IMR-90 (cell line): ENCODE measurements at regions of chr22 and their contacts with region 1.

Region 1: DNA sequence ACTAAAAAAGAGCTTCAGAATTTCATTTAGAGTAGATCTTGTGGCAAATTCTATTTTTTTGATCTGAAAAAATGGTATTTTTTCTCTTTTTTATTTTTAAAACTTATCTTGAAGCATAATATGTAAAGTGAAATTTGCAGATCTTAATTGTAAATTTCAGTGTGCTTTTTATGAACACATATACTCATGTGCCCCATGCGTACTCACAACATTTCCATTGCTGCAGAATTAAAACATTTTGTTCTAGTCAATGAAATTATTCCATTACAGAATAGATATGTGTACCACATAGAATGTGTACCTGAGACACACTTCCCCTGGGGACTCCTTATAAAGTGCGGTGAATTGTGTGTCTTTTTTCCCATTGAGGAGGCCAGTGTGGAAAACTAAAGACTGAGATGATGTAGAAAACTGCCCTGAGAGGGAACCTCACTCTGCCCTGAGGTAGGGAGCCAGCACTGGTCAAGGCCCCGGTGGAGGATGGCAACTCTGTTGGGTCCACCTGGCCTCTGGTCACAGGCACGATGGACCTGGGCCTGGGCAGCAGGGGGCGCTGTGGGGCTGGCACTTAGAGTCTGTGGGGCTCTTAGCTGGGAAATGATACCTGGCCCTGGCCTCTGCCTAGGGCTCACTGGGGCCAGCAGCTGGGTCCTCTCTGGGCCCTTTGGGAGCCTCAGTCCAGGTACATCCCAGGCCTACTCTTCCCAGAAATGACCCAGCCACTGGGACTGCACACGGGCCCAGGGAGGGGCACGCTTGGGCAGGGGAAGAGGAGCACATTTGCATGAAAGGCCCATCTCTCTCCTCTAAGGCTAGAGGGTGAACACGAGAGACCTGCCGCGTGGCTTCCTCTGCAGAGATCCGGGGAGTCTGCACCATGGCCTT is 77.9 kb upstream of the TOP3B start:
- DNase-seq: peak; percentile 24
- ATAC-seq: peak; percentile 92
- H3K4me3 ChIP-seq: no peak overlapping the region
- H3K27ac ChIP-seq: no peak overlapping the region
- H3K4me1 ChIP-seq: no peaks in the 10 kb centered on the region; the same call in 1 of the 2 replicates
- H3K27me3 ChIP-seq: peaks cover 33% of the 10 kb centered on the region
- CTCF ChIP-seq: peak; percentile 78
- POLR2A ChIP-seq: no peak
- RAD21 ChIP-seq: peak; percentile 65

Region 2: DNA sequence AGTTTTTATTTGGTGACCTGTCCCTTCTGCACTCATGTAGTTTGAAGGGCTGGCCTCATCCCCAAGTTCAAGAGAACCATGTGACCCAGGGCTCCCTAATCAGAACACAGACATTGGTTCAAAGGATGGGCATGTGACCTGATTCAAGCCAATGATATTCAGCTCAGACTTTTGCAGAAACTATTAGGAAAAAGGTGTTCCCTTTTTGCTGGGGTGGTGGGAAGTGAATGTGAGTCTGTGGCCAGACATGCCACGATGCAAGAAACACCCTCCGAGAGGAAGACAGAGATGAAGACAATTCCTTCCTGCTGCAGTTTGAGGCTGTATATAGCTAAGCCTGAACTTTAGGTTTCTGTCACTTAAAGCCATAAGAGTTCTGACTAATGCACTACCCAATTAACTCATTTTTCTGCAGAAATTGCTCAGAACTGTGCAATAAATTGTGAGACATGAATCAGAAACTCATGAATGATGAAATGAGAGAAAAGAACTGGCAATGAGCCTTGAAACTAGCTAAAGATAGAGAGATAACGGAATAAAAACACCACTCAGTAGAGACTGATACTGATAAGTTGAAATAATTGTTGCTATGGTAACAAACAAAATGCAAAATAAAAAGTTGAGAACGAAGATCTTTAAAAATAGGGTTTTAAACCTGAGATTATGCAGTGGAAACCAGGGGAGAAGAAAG is 183.8 kb before region 1 on chr22:
- CTCF ChIA-PET with region 1: no interaction called
- POLR2A ChIA-PET with region 1: no interaction called
- dilution Hi-C with region 1: no loop called
- in situ Hi-C with region 1: no loop called
- intact Hi-C with region 1: no loop called
- DNase-seq: peak; percentile 68
- ATAC-seq: peak; percentile 44
- H3K4me3 ChIP-seq: no peak overlapping the region
- H3K27ac ChIP-seq: no peak overlapping the region
- H3K4me1 ChIP-seq: no peaks in the 10 kb centered on the region
- H3K27me3 ChIP-seq: no peaks in the 10 kb centered on the region
- CTCF ChIP-seq: no peak
- POLR2A ChIP-seq: no peak
- RAD21 ChIP-seq: no peak

Region 3: GRCh38 chr22:22087854-22088657 is 27.6 kb after region 1 on chr22:
- CTCF ChIA-PET with region 1: no interaction called
- POLR2A ChIA-PET with region 1: no interaction called
- dilution Hi-C with region 1: no loop called
- in situ Hi-C with region 1: no loop called
- intact Hi-C with region 1: no loop called
- DNase-seq: no peak
- ATAC-seq: no peak; the same call in 1 of the 2 replicates
- H3K4me3 ChIP-seq: no peak overlapping the region
- H3K27ac ChIP-seq: no peak overlapping the region
- H3K4me1 ChIP-seq: peaks cover 12% of the 10 kb centered on the region
- H3K27me3 ChIP-seq: peaks cover 13% of the 10 kb centered on the region
- CTCF ChIP-seq: no peak
- POLR2A ChIP-seq: no peak
- RAD21 ChIP-seq: no peak

Region 4: GRCh38 chr22:22110548-22111266 is 50.3 kb after region 1 on chr22:
- CTCF ChIA-PET with region 1: interaction called, 12 read pairs
- POLR2A ChIA-PET with region 1: no interaction called
- dilution Hi-C with region 1: no loop called
- in situ Hi-C with region 1: no loop called
- intact Hi-C with region 1: no loop called
- DNase-seq: peak; percentile 78
- ATAC-seq: peak; percentile 90
- H3K4me3 ChIP-seq: no peak overlapping the region
- H3K27ac ChIP-seq: peak overlapping the region; percentile 50
- H3K4me1 ChIP-seq: peaks cover 16% of the 10 kb centered on the region
- H3K27me3 ChIP-seq: no peaks in the 10 kb centered on the region
- CTCF ChIP-seq: peak; percentile 55
- POLR2A ChIP-seq: no peak
- RAD21 ChIP-seq: peak; percentile 56

Region 5: GRCh38 chr22:22144858-22145257 is 84.4 kb after region 1 on chr22:
- CTCF ChIA-PET with region 1: interaction called, 3 read pairs
- POLR2A ChIA-PET with region 1: no interaction called
- dilution Hi-C with region 1: no loop called
- in situ Hi-C with region 1: no loop called
- intact Hi-C with region 1: loop called (anchors 2 kb)
- DNase-seq: peak; percentile 24
- ATAC-seq: 0 out of 2 replicates have a peak, but pooled peaks have one; percentile 48
- H3K4me3 ChIP-seq: no peak overlapping the region
- H3K27ac ChIP-seq: no peak overlapping the region
- H3K4me1 ChIP-seq: no peaks in the 10 kb centered on the region
- H3K27me3 ChIP-seq: peaks cover 32% of the 10 kb centered on the region
- CTCF ChIP-seq: peak; percentile 41; the same call in 1 of the 2 replicates
- POLR2A ChIP-seq: no peak
- RAD21 ChIP-seq: peak; percentile 25; the same call in 1 of the 2 replicates